PC-9 (cell line): ENCODE measurements at regions of chr9 and their contacts with region 1.

Region 1: DNA sequence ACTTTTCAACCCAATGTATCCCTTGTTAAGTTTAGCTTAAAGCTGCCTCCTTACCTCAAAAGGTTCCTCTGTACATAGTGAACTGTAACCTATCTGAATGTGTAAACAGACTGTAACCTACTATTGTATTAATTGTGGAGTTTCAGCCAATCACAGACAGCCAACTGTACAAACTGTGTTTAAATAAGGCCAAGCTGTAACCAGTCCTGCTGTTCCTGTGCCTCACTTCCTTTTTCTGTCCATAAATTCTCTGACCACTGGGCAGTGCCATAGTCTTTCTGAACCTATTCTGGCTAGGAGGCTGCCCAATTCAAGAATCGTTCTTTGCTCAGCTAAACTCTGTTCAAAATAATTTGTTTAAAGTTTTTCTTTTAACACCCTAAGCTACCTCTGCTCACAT is 74.7 kb upstream of the DAPK1 start:
- DNase-seq: no peak
- H3K4me3 ChIP-seq: no peak overlapping the region
- H3K27ac ChIP-seq: no peak overlapping the region
- H3K4me1 ChIP-seq: peaks cover 11% of the 10 kb centered on the region
- H3K27me3 ChIP-seq: no peaks in the 10 kb centered on the region
- CTCF ChIP-seq: no peak

Region 2: GRCh38 chr9:87382902-87383301 is 40.1 kb before region 1 on chr9:
- CTCF ChIA-PET with region 1: interaction called, 3 read pairs
- POLR2A ChIA-PET with region 1: no interaction called
- intact Hi-C with region 1: loop called (anchors 5 kb)
- DNase-seq: no peak
- H3K4me3 ChIP-seq: no peak overlapping the region
- H3K27ac ChIP-seq: no peak overlapping the region
- H3K4me1 ChIP-seq: peaks cover 48% of the 10 kb centered on the region
- H3K27me3 ChIP-seq: no peaks in the 10 kb centered on the region
- CTCF ChIP-seq: no peak

Region 3: DNA sequence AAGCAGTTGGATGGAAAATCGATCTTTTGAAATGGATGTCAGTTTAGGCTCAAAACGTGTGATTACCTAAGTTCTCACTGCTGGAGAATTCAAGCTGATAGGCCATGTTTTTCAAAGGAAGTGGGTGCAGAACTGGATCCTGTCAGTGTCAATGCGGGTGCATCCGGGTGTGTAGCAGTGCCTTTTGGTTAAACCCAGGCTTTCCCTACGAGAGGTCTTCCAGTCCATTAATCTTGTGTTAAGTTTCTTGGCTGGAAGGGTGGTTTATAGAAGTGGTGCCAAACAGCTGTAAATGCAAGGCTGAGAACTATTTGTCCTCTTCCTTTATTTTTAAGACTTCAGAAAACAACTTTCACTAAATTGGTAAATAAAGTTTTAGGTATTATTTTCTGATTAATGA is 146.5 kb after region 1 on chr9:
- CTCF ChIA-PET with region 1: no interaction called
- POLR2A ChIA-PET with region 1: no interaction called
- intact Hi-C with region 1: no loop called
- DNase-seq: no peak
- H3K4me3 ChIP-seq: no peak overlapping the region
- H3K27ac ChIP-seq: peak overlapping the region; percentile 65; the same call in 1 of the 2 replicates
- H3K4me1 ChIP-seq: peaks cover 39% of the 10 kb centered on the region
- H3K27me3 ChIP-seq: no peaks in the 10 kb centered on the region
- CTCF ChIP-seq: no peak

Region 4: DNA sequence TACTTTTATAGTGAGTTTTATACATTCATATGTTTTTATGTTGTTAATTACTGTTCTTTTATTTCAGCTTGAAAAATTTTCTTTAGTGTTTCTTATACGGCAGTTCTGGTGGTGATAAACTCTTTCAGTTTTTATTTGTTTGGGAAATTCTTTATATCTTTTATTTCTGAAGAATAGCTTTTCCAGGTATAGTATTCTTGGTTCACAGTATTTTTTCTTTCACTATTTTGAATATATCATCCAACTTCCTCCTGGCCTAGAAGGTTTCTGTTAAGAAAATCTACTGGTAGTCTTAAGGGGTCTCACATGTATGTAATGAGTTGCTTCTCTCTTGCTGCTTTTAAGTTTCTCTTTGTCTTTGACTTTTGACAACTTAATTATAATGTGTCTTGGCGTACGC is 1191.4 kb after region 1 on chr9:
- CTCF ChIA-PET with region 1: no interaction called
- POLR2A ChIA-PET with region 1: no interaction called
- intact Hi-C with region 1: no loop called
- DNase-seq: no peak
- H3K4me3 ChIP-seq: no peak overlapping the region
- H3K27ac ChIP-seq: no peak overlapping the region
- H3K4me1 ChIP-seq: no peaks in the 10 kb centered on the region
- H3K27me3 ChIP-seq: no peaks in the 10 kb centered on the region
- CTCF ChIP-seq: no peak